Left ventricle myocardium inferior (tissue), 1 donor: ENCODE measurements at regions of chrX and their contacts with region 1.

Region 1: DNA sequence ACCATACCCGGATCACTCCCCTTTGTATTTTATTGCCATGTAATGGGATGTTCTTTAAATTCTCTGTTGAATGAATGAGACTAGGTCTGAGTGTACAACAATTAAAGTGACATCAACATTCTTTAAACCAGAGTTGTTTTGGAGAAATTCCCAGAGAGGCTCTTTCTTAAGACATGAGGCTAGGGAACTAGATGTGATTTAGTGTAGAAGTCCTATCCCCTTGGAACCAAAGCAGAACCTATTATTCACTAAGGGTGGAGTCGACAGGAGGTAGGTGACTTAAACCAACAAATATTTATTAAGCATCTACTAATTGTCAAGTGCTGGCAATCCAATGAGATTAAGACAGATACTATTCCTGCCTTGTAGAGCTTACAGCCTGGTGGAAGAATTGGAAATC is 1.7 kb downstream of the EIF1AX start:
- DNase-seq: no peak
- H3K4me3 ChIP-seq: peak overlapping the region; percentile 81
- H3K27ac ChIP-seq: no peak overlapping the region
- H3K4me1 ChIP-seq: peaks cover 30% of the 10 kb centered on the region
- H3K27me3 ChIP-seq: no peaks in the 10 kb centered on the region
- CTCF ChIP-seq: no peak

Region 2: GRCh38 chrX:19836337-19836736 is 303.6 kb before region 1 on chrX:
- intact Hi-C with region 1: no loop called
- DNase-seq: no peak
- H3K4me3 ChIP-seq: no peak overlapping the region
- H3K27ac ChIP-seq: no peak overlapping the region
- H3K4me1 ChIP-seq: no peaks in the 10 kb centered on the region
- H3K27me3 ChIP-seq: no peaks in the 10 kb centered on the region
- CTCF ChIP-seq: no peak

Region 3: DNA sequence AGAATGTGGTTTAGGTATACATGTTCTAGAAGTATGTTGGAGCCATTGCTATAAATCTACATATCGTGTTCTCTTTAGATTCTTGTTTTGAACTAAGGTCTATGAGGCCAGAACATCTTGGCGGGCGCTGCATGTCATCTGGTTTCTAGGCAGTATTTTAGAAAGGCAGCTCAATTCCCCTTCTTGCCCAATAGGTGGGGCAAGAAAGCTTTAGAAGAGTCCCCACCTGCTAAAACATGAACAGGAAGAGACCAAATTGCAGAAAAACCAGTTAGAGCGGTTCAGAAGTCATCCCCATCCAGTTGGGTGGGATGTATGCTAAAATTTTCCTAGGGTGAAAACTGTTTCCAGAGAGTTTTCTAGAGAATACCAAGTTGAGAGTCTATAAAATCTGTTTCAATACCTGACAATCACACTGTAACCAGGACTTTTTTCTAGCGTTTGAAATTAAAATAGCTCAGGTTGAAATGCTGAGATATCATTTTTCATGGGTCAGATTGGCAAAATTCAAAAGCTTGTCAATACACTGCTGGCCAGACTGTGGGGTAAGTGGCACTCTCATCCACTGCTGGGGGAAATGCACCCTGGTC is 235.1 kb before region 1 on chrX:
- intact Hi-C with region 1: loop called (anchors 10 kb)
- DNase-seq: no peak
- H3K4me3 ChIP-seq: no peak overlapping the region
- H3K27ac ChIP-seq: no peak overlapping the region
- H3K4me1 ChIP-seq: no peaks in the 10 kb centered on the region
- H3K27me3 ChIP-seq: no peaks in the 10 kb centered on the region
- CTCF ChIP-seq: peak; percentile 76

Region 4: GRCh38 chrX:20244931-20245330 is 105.0 kb after region 1 on chrX:
- intact Hi-C with region 1: no loop called
- DNase-seq: peak; percentile 18
- H3K4me3 ChIP-seq: no peak overlapping the region
- H3K27ac ChIP-seq: no peak overlapping the region
- H3K4me1 ChIP-seq: peaks cover 4% of the 10 kb centered on the region
- H3K27me3 ChIP-seq: no peaks in the 10 kb centered on the region
- CTCF ChIP-seq: no peak